ENCODE measurements at regions of chr4 and their contacts with region 1.

Region 1: GRCh38 chr4:74451200-74451661 is 6.3 kb downstream of the AREG start:
- DNase-seq: peak; percentile 85
- H3K4me3 Mint-ChIP-seq: peak overlapping the region; percentile 95
- H3K27ac Mint-ChIP-seq: peak overlapping the region; percentile 37
- H3K4me1 Mint-ChIP-seq: peaks cover 32% of the 10 kb centered on the region
- H3K27me3 Mint-ChIP-seq: no peaks in the 10 kb centered on the region
- CTCF ChIP-seq: no peak

Region 2: GRCh38 chr4:74320559-74321118 is 130.6 kb before region 1 on chr4:
- CTCF ChIA-PET with region 1: interaction called, 5 read pairs
- POLR2A ChIA-PET with region 1: interaction called, 18 read pairs
- intact Hi-C with region 1: no loop called
- DNase-seq: peak; percentile 90
- H3K4me3 Mint-ChIP-seq: no peak overlapping the region
- H3K27ac Mint-ChIP-seq: no peak overlapping the region
- H3K4me1 Mint-ChIP-seq: peaks cover 36% of the 10 kb centered on the region
- H3K27me3 Mint-ChIP-seq: no peaks in the 10 kb centered on the region
- CTCF ChIP-seq: peak; percentile 67

Region 3: DNA sequence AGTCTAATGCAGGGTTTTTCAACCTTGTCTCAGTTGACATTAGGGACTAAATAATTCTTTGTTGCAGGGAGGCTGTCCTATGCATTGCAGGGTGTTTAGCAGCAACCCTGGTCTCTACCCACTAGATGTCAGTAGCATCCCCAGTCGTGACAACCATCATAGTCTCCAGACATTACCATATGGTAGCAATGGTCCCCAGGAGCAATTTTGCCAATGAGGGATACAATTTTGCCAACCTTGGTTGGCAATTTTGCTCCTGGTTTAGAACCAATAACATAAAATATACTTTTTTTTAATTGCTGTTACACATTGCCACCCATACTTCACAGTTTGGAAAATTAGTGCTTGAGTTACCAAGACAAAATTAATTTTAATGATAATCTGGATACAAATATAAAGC is 80.3 kb before region 1 on chr4:
- CTCF ChIA-PET with region 1: interaction called, 55 read pairs
- POLR2A ChIA-PET with region 1: interaction called, 188 read pairs
- intact Hi-C with region 1: no loop called
- DNase-seq: peak; percentile 84
- H3K4me3 Mint-ChIP-seq: no peak overlapping the region
- H3K27ac Mint-ChIP-seq: no peak overlapping the region
- H3K4me1 Mint-ChIP-seq: peaks cover 35% of the 10 kb centered on the region
- H3K27me3 Mint-ChIP-seq: no peaks in the 10 kb centered on the region
- CTCF ChIP-seq: peak; percentile 83

Region 4: DNA sequence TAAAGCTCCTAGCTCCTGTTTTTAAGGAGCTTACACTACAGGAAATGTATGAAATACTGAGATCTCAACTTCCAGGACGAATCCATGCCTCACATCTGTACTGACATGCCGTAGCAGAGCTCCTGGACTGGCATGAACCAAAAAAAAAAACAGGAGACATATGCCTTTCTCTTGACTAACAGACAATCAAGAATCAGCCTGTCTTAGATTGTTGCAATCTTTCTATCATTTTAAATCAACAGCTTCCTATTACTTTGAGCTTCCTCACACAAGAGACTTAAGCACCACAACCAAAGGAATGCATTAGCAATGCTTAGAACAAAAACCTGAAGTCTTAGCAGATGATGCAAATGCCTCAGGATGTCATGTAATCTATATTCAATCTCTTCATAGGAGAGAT is 41.0 kb before region 1 on chr4:
- CTCF ChIA-PET with region 1: interaction called, 6 read pairs
- POLR2A ChIA-PET with region 1: interaction called, 217 read pairs
- intact Hi-C with region 1: no loop called
- DNase-seq: peak; percentile 70
- H3K4me3 Mint-ChIP-seq: peak overlapping the region; percentile 55
- H3K27ac Mint-ChIP-seq: peak overlapping the region; percentile 97
- H3K4me1 Mint-ChIP-seq: peaks cover 42% of the 10 kb centered on the region
- H3K27me3 Mint-ChIP-seq: no peaks in the 10 kb centered on the region
- CTCF ChIP-seq: no peak

Region 5: DNA sequence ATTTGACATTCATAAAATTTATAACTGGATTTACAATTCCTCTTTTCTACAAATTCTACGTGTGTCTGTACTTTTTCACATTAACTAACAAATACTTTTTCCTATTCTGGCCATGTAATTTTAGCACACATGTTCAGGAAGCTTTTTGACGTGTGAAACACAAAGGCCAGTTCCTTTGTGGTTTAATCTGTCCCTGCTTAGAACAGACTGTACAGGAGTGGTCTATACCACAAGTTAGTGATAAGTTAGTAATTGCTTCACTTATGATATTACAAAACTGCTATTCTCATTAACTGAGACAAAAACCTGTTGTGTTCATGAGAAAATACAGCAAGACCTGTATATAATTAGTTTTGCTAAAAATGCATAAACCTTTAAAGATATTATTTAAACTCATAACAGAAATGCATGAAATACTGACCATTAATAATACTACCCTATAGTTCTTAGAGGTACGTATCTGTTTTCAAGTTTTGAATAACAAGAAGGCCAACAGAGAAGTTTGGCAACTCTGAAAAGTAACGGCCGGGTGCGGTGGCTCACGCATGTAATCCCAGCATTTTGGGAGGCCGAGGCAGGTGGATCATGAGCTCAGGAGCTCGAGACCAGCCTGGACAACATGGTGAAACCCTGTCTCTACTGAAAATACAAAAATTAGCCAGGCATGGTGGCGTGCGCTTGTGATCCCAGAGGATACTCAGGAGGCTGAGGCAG is 20.0 kb before region 1 on chr4:
- CTCF ChIA-PET with region 1: interaction called, 25 read pairs
- POLR2A ChIA-PET with region 1: interaction called, 186 read pairs
- intact Hi-C with region 1: no loop called
- DNase-seq: peak; percentile 86
- H3K4me3 Mint-ChIP-seq: peak overlapping the region; percentile 45
- H3K27ac Mint-ChIP-seq: peak overlapping the region; percentile 87
- H3K4me1 Mint-ChIP-seq: peaks cover 35% of the 10 kb centered on the region
- H3K27me3 Mint-ChIP-seq: no peaks in the 10 kb centered on the region
- CTCF ChIP-seq: no peak

Region 6: GRCh38 chr4:74499986-74500781 is 49.0 kb after region 1 on chr4:
- CTCF ChIA-PET with region 1: no interaction called
- POLR2A ChIA-PET with region 1: interaction called, 8 read pairs
- intact Hi-C with region 1: loop called (anchors 5 kb)
- DNase-seq: no peak
- H3K4me3 Mint-ChIP-seq: no peak overlapping the region
- H3K27ac Mint-ChIP-seq: no peak overlapping the region
- H3K4me1 Mint-ChIP-seq: peaks cover 20% of the 10 kb centered on the region
- H3K27me3 Mint-ChIP-seq: peaks cover 11% of the 10 kb centered on the region
- CTCF ChIP-seq: no peak

Region 7: DNA sequence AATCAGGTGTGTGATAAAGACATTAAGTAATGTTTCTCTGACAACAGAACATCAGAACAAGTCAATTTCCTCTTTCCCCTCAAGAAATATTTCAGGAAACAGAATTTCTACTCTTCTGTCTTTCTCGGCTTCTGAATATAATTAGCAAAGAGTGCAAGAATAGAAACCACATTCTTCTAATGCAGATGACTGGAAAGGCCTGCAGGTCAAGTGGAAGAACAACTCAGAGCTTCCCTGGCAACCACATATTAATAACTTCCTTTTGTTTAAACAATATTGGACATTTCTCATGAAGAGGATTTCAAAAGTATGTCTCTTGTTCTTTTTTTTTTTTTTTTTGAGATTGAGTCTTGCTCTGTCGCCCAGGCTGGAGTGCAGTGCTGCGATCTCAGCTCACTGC is 707.2 kb after region 1 on chr4:
- CTCF ChIA-PET with region 1: no interaction called
- POLR2A ChIA-PET with region 1: no interaction called
- intact Hi-C with region 1: no loop called
- DNase-seq: no peak
- H3K4me3 Mint-ChIP-seq: no peak overlapping the region
- H3K27ac Mint-ChIP-seq: no peak overlapping the region
- H3K4me1 Mint-ChIP-seq: no peaks in the 10 kb centered on the region
- H3K27me3 Mint-ChIP-seq: peaks cover 21% of the 10 kb centered on the region
- CTCF ChIP-seq: no peak

Measured in MCF 10A (cell line).